ENCODE measurements at regions of chr5 and their contacts with region 1.

Region 1: GRCh38 chr5:31232273-31232888 is 38.9 kb downstream of the CDH6 start:
- DNase-seq: peak; percentile 5
- H3K4me3 ChIP-seq: no peak overlapping the region
- CTCF ChIP-seq: peak; percentile 57

Region 2: GRCh38 chr5:31186672-31187267 is 45.6 kb before region 1 on chr5:
- CTCF ChIA-PET with region 1: interaction called, 14 read pairs
- POLR2A ChIA-PET with region 1: no interaction called
- DNase-seq: no peak
- H3K4me3 ChIP-seq: no peak overlapping the region
- CTCF ChIP-seq: peak; percentile 60

Region 3: DNA sequence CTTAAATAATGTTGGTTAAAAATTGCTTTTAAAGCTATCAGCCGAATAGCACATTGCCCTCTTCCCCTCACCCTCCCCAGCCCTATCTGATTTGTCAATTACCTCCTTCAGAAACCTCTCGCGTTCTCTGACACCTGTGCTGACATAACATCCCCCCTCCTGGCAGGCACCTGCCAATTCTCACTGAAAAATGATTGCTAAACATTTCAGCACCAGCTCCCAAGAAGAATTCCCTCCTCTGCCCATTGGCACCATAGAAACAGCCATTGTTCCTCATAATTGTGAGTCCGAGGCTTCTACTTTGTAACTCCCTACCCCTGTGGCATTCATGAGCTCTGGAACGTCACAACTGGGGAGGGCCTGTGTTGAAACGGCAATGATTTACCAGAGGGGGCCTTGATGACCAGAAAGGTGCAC is 18.7 kb before region 1 on chr5:
- CTCF ChIA-PET with region 1: interaction called, 74 read pairs
- POLR2A ChIA-PET with region 1: no interaction called
- DNase-seq: no peak
- H3K4me3 ChIP-seq: no peak overlapping the region
- CTCF ChIP-seq: no peak

Region 4: DNA sequence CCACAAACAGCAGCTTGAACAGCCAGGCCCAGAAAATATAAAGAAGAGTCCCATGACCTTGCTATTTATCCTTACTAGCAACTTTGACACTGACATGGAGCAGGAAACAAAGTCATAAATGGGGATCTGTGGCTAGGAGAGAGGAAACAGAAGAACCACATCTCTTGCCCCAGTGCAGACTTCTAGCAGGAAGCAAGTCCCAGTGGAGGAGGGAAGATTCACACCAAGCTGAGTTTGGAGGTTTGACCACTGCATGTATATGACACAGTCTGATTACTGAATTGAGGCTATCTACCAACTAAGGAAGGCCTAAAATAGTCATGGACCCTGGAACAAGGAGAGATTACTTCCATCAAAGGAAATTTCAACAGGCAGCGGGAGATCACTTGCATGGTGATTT is 12.5 kb after region 1 on chr5:
- CTCF ChIA-PET with region 1: interaction called, 33 read pairs
- POLR2A ChIA-PET with region 1: no interaction called
- DNase-seq: no peak
- H3K4me3 ChIP-seq: no peak overlapping the region
- CTCF ChIP-seq: no peak

Region 5: DNA sequence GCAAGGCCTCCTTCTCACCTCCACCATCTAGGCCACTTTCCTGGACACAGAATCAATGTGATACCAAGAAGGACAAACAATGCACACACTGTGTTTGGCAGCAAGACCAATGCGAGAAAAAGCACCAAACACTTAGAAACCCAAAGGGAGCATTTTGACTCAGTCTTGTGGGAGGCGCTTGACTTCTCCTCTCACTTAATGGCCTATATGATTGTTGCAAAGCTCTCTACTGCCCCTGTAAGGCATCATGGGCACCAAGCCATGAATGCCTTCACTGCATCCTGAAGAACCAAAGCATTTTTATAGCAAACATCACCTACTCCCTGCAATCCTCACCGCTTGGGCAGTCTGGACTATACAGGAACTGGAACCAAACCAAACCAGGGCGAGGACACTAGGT is 18.7 kb after region 1 on chr5:
- CTCF ChIA-PET with region 1: interaction called, 17 read pairs
- POLR2A ChIA-PET with region 1: no interaction called
- DNase-seq: no peak
- H3K4me3 ChIP-seq: no peak overlapping the region
- CTCF ChIP-seq: no peak

Region 6: DNA sequence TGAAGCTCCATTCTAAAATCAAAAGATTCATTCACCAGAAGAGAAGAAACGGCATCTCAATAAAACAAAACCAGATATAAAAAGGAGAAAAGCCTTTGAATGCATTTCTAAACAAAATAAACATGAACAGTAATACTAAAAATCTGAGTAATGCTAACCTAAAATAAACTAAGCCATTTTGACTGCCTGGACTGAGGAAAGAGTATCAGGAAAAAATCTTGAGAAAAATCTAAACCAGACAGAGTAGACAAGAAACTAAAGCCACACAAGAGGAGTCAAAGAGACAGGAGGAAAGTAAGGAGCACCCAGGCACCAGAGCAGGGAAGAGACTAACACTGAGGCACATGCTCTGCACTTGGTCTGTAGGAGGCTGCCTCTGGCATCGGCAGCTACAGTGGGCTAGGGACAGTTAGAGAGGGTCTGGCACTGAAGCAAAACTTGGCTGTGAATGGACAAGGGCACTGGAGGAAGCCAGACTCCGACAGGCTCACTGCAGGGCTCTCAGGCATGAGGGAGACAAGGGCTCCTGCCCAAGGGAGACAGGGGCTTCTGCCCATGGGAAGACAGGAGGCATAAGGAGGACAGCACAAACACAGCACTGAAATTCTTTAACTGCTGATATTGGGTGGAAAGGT is 249.3 kb after region 1 on chr5:
- CTCF ChIA-PET with region 1: interaction called, 34 read pairs
- POLR2A ChIA-PET with region 1: no interaction called
- DNase-seq: no peak
- H3K4me3 ChIP-seq: no peak overlapping the region
- CTCF ChIP-seq: no peak

Region 7: DNA sequence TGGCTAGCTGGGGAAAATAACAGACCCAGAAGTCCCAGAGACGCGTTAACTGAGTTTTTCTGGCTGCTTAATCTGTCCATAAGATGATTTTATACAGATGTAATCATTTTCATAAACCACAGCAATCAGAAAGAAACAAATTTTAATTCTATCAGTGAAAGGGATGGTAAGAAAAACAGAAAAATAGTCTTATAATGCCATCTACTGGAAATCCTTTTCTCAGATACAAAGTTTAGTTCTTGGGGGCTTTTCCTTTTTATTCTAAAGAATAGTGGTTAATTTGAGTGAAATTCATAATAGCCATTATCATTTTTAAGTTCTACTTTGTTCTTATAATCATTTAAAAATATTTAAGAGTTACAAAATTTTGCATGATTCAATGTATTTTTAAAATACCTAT is 255.1 kb after region 1 on chr5:
- CTCF ChIA-PET with region 1: interaction called, 34 read pairs
- POLR2A ChIA-PET with region 1: no interaction called
- DNase-seq: no peak
- H3K4me3 ChIP-seq: no peak overlapping the region
- CTCF ChIP-seq: no peak